HEK293T (cell line): ENCODE measurements at regions of chr2 and their contacts with region 1.

Region 1: DNA sequence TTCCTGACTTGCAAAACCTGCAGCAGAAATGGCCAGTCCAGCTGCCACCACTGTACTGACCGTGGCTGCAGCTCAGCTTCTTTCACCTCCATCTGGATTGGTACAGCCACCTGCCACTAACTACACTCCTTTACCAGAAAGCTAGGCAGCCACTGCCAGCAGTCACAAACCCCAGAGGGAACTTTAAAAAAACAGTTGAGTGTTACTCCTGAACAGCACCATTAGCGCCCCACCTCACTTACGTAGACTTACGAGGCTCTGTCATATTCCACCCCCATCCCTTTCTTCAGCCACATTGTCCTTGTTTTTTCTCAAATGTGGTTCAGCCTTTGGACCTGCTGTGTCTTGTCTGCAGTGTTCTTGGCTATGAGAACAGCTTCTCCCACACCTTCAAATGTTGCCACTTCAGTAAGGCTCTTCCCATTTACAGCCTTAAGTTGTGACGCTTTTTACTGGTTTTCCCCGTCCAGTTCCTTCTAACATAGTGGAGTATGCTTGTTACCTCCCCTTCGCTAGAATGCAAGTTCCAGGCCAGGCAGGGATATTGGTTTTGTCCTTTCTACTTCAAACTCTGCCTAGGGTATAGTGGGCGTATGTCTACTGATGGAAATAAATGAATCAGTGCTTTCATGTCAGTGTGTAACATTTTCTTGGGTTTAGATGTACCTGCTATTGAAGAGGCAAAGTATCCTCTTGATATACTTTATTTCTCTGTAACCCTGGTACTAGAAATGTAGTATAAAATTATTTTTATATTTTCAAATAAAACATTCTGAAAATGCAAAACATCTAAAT is 17.1 kb downstream of the HNRNPA3 start:
- DNase-seq: no peak

Region 2: GRCh38 chr2:177246000-177246399 is 16.4 kb after region 1 on chr2:
- CTCF ChIA-PET with region 1: no interaction called
- POLR2A ChIA-PET with region 1: no interaction called
- DNase-seq: no peak

Region 3: DNA sequence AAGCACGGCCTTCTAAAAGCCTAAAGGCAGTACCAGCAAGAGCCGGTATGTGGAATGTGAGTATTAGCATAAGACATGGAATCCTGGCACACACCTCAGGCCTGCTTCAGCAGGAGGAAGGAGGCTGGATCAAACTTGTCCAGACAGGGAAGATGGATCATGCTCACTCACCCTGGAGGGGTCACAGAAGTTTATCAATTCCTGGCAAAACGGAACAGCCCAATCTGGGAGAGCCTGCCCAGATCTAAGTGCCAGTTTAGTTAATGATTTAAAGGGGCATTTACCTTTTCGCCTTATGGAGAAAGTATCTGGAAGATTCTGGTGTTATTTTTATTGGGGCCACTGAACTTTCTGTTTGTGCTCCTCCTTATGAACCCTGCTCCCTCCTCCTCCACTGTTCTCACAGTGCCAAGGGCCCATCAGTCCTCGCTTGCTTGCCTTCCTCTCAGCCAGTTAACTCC is 93.2 kb after region 1 on chr2:
- CTCF ChIA-PET with region 1: no interaction called
- POLR2A ChIA-PET with region 1: no interaction called
- DNase-seq: no peak

Region 4: DNA sequence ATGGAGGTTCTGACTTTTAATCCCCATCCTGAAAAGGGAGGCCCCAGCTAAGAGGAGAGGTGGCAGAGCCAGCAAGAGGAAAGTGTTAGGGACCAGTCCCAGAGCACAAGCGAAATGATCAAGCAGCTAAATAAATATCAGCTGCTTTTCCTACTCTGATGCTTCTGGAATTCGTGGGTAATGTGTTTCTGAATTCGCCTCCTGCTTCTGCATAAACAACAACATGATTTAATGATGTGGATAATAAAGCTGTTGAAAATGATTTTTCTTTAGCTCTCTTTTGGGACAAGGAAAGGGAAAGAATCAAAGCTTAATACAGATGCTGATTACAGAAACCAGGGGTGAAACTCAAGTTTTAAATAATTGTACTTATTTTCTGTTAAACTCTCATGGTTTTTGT is 513.2 kb after region 1 on chr2:
- CTCF ChIA-PET with region 1: interaction called, 11 read pairs
- POLR2A ChIA-PET with region 1: no interaction called
- DNase-seq: no peak